Psoas muscle (tissue), 8 donors: ENCODE measurements at regions of chr3 and their contacts with region 1.

Region 1: DNA sequence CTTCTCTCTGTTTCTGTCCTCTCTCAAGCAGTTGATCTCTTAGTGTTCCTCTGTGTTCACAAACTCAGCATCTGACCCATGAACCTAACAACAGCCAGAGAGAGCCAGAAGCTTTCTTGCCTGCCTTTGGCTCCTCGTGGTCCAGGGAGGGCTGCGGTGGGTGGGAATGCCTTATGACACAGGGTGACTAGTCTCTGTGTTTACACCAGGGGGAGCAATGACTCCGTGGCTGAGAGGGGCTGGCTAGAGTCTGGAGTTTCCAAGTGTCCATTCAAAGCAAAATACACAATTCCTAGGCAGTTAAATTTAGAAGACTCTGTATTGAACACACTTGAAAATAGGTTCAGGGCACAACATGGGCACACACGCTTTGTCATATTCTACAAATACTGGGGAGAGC is 370.0 kb upstream of the FRG2C start:
- DNase-seq: peak in 1 of 2 donors; percentile 25
- ATAC-seq: peak; percentile 89 to 96 (median 92)
- H3K4me3 ChIP-seq: no peak overlapping the region
- H3K27ac ChIP-seq: no peak overlapping the region
- H3K4me1 ChIP-seq: no peaks in the 10 kb centered on the region
- H3K27me3 ChIP-seq: no peaks in the 10 kb centered on the region
- CTCF ChIP-seq: peak; percentile 70

Region 2: GRCh38 chr3:75650191-75650590 is 356.1 kb after region 1 on chr3:
- intact Hi-C with region 1: loop called in 1 of 2 experiments (anchors 10 kb)
- DNase-seq: no peak
- ATAC-seq: no peak
- H3K4me3 ChIP-seq: no peak overlapping the region
- H3K27ac ChIP-seq: no peak overlapping the region
- H3K4me1 ChIP-seq: no peaks in the 10 kb centered on the region
- H3K27me3 ChIP-seq: peaks cover 0 to 6% (median 0%) of the 10 kb centered on the region in 3 donors
- CTCF ChIP-seq: no peak